ENCODE measurements at regions of chr6 and their contacts with region 1.

Region 1: DNA sequence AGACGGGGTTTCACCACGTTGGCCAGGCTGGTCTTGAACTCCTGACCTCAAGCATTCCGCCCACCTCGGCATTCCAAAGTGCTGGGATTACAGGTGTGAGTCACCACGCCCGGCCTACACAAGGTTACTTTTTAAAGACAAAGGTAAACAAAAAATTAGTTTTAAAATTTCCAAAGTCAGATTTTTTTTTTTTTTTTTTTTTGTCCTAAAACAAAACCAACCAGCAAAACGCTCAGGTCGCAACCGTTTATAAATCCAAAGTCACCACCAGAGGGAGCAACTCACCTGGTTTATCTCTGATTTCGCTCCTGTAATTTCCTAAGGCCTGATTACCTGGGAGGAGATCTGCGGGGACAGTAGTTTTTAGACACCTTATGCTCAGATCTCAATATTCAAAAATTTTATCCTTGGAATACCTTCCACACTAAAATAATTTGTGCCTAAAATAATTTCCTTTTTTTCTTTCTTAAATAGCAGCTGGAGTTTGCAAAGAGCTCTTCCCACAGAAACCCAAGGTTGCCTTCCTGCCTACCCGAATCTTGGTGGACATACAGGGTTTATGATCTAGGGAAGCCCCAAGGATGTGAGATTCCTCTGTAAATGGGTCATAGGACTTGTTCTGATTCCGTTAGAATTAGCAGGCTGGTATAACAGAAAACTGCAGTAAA is 19.8 kb upstream of the TREM1 start:
- DNase-seq: peak; percentile 62 to 72 (median 63)
- H3K4me3 ChIP-seq: no peak overlapping the region
- H3K27ac ChIP-seq: no peak overlapping the region
- H3K4me1 ChIP-seq: no peaks in the 10 kb centered on the region
- H3K27me3 ChIP-seq: no peaks in the 10 kb centered on the region

Region 2: GRCh38 chr6:41294178-41294872 is 12.0 kb before region 1 on chr6:
- CTCF ChIA-PET with region 1: interaction called, 14 read pairs
- POLR2A ChIA-PET with region 1: no interaction called
- DNase-seq: no peak
- H3K4me3 ChIP-seq: no peak overlapping the region
- H3K27ac ChIP-seq: no peak overlapping the region
- H3K4me1 ChIP-seq: peaks cover 0 to 6% (median 0%) of the 10 kb centered on the region in 4 experiments
- H3K27me3 ChIP-seq: no peaks in the 10 kb centered on the region

Region 3: DNA sequence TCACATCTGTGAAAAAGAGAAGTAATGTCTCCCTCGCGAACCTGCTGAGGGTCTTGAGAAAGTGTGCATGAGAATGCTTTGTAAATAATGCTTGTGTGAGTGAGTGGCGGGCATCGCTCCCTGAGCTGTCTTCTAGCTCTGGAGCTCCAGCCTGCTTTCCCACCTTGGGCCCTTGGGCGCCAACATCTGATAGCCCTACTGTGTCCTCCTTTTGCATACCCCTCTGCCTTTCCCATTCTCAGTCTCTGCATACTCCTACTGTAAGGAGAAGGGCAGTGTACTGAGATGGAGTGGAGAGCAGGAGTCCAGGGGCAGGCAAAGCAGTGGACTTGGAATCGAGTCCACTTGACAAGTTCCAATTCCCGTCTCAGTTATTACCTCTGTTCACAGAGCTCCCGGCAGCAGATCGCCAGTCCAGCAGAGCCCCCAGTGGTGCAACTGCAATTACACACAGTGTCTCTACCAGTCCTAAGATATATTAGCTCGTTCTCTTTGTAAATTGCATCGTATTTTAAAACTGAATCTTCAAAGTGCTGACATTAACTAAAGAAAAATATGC is 28.2 kb after region 1 on chr6:
- CTCF ChIA-PET with region 1: interaction called, 12 read pairs
- POLR2A ChIA-PET with region 1: no interaction called
- DNase-seq: peak; percentile 8 to 30 (median 25)
- H3K4me3 ChIP-seq: no peak overlapping the region
- H3K27ac ChIP-seq: no peak overlapping the region
- H3K4me1 ChIP-seq: peaks cover 0 to 56% (median 22%) of the 10 kb centered on the region in 4 experiments
- H3K27me3 ChIP-seq: no peaks in the 10 kb centered on the region